Tibial artery (tissue), 4 donors: ENCODE measurements at regions of chr6 and their contacts with region 1.

Region 1: DNA sequence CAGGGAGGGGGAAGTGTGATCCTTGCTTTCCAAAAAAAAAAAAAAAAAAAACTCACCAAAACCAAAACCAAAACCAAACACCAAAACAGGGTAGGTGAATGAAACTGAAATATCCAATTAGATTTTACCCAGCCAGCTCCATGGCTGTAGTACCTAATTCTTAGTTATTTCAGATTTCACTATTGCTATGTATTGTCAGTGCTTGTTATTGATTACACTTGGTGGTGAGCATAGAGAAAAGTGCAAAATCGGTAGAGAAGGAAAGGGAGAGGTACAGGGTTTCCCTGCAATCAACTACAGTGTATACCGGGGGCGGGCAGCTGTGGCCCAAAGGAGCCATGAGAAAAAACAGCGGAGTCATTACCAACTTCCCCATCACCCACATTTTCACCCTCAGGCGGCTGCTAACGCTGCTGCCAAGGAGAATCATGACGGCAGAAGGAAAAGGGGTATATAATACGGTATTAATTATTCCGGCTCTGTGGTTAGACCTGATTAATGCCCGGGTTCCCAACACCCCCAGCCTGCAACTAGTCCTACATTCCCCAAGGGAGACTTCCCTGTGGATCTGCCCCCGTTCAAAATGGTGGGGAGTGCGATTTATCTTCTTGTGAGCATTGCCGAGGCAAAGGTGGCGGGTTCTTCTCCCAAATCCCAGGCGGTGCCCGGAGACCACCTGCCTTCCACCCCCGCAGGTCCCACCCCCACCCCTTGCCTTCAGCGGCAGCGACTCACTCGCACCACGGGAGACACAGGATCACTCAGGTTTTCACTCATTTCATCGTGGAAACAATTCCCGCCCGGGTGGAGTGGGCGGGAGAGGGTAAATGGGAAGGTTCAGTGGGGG is at the start of gene C6orf62:
- DNase-seq: peak in 1 of 2 donors; percentile 32
- H3K4me3 ChIP-seq: peak within 1 kb of the TSS; percentile 75 to 77
- H3K27ac ChIP-seq: peak within 1 kb of the TSS; percentile 98 to 99
- H3K4me1 ChIP-seq: peaks cover 0 to 44% (median 30%) of the 10 kb centered on the region in 4 donors
- H3K27me3 ChIP-seq: no peaks in the 10 kb centered on the region
- CTCF ChIP-seq: no peak

Region 2: DNA sequence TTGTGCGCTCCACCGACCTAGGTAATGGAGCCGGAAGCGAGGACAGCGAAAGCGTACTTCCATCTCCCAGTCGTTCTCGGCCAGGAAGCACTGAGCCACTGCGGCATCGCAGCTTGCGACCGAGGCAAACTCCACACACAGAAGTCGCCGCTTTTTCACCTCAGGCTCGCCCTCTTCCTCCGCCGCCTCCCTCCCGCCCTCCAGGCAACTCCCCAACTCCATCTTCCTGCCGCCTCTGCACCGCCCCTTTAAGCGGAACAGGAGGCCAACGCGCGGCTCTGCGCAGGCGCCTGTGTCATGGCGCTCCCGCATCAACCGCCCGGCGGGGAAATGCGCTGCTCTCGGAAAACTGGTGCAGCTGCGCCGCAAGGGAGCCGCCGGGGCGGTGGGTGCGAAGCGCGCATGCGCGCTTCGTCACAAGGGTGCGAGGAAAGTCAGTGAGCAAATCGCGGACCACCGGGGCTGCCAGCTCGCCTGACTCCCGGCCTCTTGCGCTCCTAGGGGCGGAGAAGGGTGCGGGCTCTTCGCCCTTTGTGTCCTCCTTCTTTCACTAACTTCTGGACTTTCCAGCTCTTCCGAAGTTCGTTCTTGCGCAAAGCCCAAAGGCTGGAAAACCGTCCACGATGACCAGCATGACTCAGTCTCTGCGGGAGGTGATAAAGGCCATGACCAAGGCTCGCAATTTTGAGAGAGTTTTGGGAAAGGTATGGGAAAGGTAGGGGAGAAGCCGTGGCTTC is 52.5 kb before region 1 on chr6 and contains the starts of genes ACOT13 and TDP2:
- intact Hi-C with region 1: loop called (anchors 10 kb)
- DNase-seq: peak; percentile 92 to 98
- H3K4me3 ChIP-seq: peak within 1 kb of the TSS; percentile 74 to 81
- H3K27ac ChIP-seq: peak within 1 kb of the TSS; percentile 85 to 86
- H3K4me1 ChIP-seq: peaks cover 0 to 40% (median 25%) of the 10 kb centered on the region in 4 donors
- H3K27me3 ChIP-seq: no peaks in the 10 kb centered on the region
- CTCF ChIP-seq: peak; percentile 59 to 62

Region 3: GRCh38 chr6:24752917-24753490 is 33.7 kb after region 1 on chr6:
- intact Hi-C with region 1: loop called (anchors 1 kb)
- DNase-seq: no peak
- H3K4me3 ChIP-seq: no peak overlapping the region
- H3K27ac ChIP-seq: no peak overlapping the region
- H3K4me1 ChIP-seq: no peaks in the 10 kb centered on the region
- H3K27me3 ChIP-seq: no peaks in the 10 kb centered on the region
- CTCF ChIP-seq: no peak

Region 4: DNA sequence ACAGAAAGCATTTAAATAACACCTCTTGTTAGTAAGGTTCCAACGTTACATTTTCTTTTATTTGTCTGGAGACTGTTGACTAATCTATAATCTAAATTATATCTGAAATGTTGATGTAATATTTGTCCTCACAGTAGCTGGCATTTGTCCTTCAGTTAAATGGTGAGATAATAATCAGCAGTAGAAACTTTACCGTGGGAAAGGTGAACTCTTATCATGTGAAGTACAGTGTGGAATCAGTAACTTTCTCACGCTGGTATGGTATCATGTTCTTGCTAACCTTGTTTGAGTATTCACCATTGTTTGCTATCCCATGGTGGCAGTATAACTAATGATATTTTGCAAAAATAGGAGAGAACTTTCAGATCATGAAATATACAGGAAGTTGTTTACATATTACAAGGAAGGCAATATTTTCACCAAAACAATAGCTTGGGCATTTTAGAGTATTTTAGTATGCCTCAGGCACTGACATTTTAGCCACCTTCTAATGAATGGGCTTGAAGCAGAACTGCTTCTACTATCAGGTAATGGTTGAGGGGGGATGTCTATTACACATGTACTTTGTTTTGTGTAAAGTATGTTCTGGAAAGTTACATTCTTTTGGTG is 60.2 kb after region 1 on chr6:
- intact Hi-C with region 1: no loop called
- DNase-seq: no peak
- H3K4me3 ChIP-seq: no peak overlapping the region
- H3K27ac ChIP-seq: no peak overlapping the region
- H3K4me1 ChIP-seq: peaks cover 0 to 10% (median 6%) of the 10 kb centered on the region in 4 donors
- H3K27me3 ChIP-seq: no peaks in the 10 kb centered on the region
- CTCF ChIP-seq: no peak

Region 5: DNA sequence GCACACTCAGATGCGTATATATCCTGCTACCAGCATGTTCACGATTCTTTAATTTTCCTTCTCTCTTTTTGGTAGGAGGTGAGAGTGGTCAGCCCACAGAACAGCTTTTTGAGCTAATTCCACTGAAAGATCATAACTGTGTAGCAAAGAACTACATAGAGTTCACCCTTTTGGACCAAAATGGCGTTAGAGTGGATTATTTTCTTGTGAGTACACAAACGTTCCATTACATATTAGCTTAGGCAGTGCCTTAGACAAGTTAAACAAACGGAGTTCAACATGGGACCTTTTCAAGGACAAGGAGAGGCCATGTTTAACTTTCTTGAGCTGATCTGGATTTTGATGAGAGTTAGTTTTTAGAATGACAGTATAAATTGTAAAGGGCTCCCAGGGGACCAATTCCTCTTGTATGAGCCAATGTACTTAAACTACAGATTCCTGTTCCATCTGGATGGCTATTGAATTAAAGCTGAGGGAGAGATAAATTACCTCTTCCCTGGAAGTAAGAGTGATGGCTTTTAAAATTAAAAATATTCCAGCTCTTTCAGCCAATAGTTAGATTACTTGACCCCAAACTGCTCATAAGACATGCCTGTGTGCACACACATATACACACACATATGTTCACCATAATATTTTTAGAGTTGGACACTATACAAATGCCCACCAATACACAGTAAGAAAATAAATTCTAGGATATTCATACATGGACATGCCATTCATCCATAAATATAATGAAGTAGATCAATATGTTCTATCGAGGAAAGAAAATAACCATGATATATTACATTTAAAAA is 105.0 kb after region 1 on chr6:
- intact Hi-C with region 1: no loop called
- DNase-seq: no peak
- H3K4me3 ChIP-seq: no peak overlapping the region
- H3K27ac ChIP-seq: no peak overlapping the region
- H3K4me1 ChIP-seq: no peaks in the 10 kb centered on the region
- H3K27me3 ChIP-seq: no peaks in the 10 kb centered on the region
- CTCF ChIP-seq: no peak